ENCODE measurements at regions of chr2 and their contacts with region 1.

Region 1: GRCh38 chr2:231780123-231780908 is 766 bp downstream of the PDE6D start:
- DNase-seq: peak; percentile 20
- CTCF ChIP-seq: no peak

Region 2: DNA sequence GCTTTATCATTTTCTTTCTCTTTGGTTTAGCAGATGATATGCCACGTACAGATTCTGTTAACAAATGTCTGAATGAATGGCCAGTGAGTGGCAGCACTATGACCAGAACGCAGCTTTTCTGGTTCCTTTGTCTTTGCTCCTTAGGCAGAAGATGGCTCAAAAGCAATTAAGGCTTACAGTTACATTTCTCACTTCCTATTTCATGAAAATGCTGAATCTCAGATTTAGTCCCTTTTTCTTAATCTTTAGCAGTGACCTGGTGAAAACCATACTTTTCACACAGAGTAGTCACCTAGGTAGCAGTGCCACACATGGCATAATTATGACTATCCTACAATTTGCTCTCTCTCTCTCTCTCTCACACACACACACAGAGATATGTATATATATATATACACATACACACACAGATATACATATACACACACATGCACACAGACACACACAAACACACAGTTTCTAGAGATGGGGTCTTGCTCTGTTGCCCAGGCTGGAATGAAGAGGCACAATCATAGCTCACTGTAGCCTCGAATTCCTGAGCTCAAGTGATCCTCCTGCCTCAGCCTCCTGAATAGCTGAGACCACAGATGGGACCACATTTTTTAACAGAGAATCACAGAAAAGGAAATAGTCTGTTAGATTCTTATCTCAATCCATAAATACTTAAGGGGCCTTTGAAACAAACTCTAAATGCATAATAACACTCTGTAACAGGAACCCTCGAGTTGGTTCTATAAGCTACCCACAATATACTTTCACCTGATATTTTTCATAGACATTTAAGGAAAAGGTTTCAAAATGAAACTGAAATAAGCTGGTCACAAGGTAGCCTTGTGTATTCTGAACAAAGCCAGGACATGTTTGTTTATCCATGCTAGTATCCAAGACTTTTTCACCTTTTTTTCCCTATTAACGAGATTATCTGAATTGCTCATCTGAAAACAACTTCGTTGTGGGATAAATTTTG is 10.9 kb before region 1 on chr2:
- CTCF ChIA-PET with region 1: interaction called, 11 read pairs
- POLR2A ChIA-PET with region 1: interaction called, 3 read pairs
- DNase-seq: peak; percentile 54
- CTCF ChIP-seq: peak; percentile 34

Measured in GM10248 (cell line).